CD4-positive, alpha-beta T cell (primary cell): ENCODE measurements at regions of chr6 and their contacts with region 1.

Region 1: DNA sequence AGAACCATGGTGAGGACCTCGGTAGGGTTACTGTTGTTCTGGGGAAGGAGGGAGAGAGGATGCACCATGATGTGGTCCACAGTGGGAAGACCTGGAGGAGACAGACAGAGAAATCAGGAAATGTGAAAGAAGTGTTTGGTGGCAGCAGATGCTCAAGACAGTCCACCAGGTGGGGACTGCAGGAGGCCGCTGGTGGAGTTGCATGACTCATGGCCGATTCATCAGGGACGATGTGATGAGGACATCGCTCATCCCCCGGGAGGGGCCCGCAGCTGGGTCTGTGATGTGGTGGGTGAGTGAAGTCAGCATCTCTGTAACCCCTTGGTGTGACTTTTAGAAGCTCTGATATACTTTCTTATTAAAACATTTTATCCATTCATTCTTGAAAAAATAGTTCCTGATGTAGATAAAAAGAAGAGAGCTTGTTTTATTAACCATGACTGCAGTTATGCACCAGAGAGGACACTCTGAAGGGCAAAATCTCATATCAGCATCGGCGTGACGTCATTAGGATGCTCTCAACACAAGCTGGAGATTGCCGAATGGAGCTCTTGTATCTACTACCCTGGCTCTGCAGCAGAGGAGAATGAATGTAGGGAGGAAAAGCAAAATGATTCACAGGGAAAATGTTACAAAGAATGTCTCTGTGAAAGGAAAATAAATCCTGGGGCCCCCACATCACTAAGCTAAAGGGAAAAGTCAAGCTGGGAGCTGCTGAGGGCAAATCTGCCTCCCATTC is 71.2 kb downstream of the RAMACL start:
- DNase-seq: peak in 9 of 14 experiments; percentile 17 to 72 (median 44)
- ATAC-seq: no peak
- H3K4me3 ChIP-seq: no peak overlapping the region
- H3K4me3 Mint-ChIP-seq: no peak overlapping the region
- H3K27ac ChIP-seq: no peak overlapping the region
- H3K27ac Mint-ChIP-seq: no peak overlapping the region
- H3K4me1 ChIP-seq: peaks cover 7% of the 10 kb centered on the region
- H3K4me1 Mint-ChIP-seq: peaks cover 8% of the 10 kb centered on the region
- H3K27me3 ChIP-seq: no peaks in the 10 kb centered on the region
- H3K27me3 Mint-ChIP-seq: no peaks in the 10 kb centered on the region
- CTCF ChIP-seq: no peak

Region 2: GRCh38 chr6:166143011-166143410 is 372.2 kb before region 1 on chr6:
- CTCF ChIA-PET with region 1: no interaction called
- POLR2A ChIA-PET with region 1: no interaction called
- intact Hi-C with region 1: no loop called
- DNase-seq: no peak
- ATAC-seq: no peak
- H3K4me3 ChIP-seq: no peak overlapping the region
- H3K4me3 Mint-ChIP-seq: no peak overlapping the region
- H3K27ac ChIP-seq: no peak overlapping the region
- H3K27ac Mint-ChIP-seq: no peak overlapping the region
- H3K4me1 ChIP-seq: no peaks in the 10 kb centered on the region
- H3K4me1 Mint-ChIP-seq: no peaks in the 10 kb centered on the region
- H3K27me3 ChIP-seq: no peaks in the 10 kb centered on the region
- H3K27me3 Mint-ChIP-seq: peaks cover 4% of the 10 kb centered on the region
- CTCF ChIP-seq: no peak

Region 3: GRCh38 chr6:166275714-166276166 is 239.5 kb before region 1 on chr6:
- CTCF ChIA-PET with region 1: no interaction called
- POLR2A ChIA-PET with region 1: no interaction called
- intact Hi-C with region 1: loop called (anchors 5 to 10 kb)
- DNase-seq: peak; percentile 47 to 91 (median 80)
- ATAC-seq: peak; percentile 96
- H3K4me3 ChIP-seq: no peak overlapping the region
- H3K4me3 Mint-ChIP-seq: no peak overlapping the region
- H3K27ac ChIP-seq: no peak overlapping the region
- H3K27ac Mint-ChIP-seq: no peak overlapping the region
- H3K4me1 ChIP-seq: peaks cover 10% of the 10 kb centered on the region
- H3K4me1 Mint-ChIP-seq: peaks cover 8% of the 10 kb centered on the region
- H3K27me3 ChIP-seq: no peaks in the 10 kb centered on the region
- H3K27me3 Mint-ChIP-seq: peaks cover 8% of the 10 kb centered on the region
- CTCF ChIP-seq: peak; percentile 98

Region 4: DNA sequence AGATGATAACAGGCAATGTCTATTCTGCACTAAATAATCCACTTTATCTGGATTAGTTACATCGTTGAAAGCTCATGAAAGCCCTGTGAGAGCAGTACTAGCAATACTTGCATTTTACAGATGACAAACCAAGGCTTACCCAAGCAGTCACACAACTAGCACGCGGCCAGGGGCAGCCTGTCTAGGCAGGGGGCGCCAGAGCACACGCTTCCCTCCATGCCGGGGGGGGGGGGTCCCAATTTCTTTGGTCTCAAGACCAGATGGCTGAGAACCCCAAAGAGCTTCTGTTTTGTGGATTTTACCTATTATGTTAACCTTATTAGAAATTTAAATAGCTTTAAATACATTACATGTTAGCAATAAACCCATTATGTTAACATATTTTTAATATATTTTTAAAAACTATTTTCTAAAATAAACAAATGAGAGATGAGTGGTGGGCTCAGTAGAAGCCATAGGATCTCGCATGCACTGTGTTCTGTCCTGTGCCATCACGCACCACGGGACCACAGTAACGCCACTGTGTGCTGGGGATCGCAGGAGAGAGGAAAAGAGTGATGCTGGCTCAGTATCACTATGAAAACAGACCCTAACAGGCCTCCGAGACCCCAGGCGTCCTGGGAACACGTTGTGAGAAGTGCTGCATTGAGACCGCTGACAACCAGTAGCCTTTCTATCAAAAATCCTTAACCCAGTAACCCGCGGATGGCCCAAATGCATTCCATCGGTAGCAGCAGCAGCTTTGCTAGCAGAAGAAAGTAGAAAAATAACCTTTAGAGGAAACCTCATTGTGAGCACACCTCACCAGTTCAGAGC is 201.8 kb before region 1 on chr6:
- CTCF ChIA-PET with region 1: no interaction called
- POLR2A ChIA-PET with region 1: no interaction called
- intact Hi-C with region 1: loop called in 1 of 2 experiments (anchors 5 kb)
- DNase-seq: peak in 13 of 14 experiments; percentile 23 to 79 (median 44)
- ATAC-seq: peak; percentile 99
- H3K4me3 ChIP-seq: no peak overlapping the region
- H3K4me3 Mint-ChIP-seq: no peak overlapping the region
- H3K27ac ChIP-seq: no peak overlapping the region
- H3K27ac Mint-ChIP-seq: no peak overlapping the region
- H3K4me1 ChIP-seq: peaks cover 2% of the 10 kb centered on the region
- H3K4me1 Mint-ChIP-seq: no peaks in the 10 kb centered on the region
- H3K27me3 ChIP-seq: peaks cover 12 to 21% of the 10 kb centered on the region in 2 experiments
- H3K27me3 Mint-ChIP-seq: peaks cover 23% of the 10 kb centered on the region
- CTCF ChIP-seq: peak; percentile 78

Region 5: DNA sequence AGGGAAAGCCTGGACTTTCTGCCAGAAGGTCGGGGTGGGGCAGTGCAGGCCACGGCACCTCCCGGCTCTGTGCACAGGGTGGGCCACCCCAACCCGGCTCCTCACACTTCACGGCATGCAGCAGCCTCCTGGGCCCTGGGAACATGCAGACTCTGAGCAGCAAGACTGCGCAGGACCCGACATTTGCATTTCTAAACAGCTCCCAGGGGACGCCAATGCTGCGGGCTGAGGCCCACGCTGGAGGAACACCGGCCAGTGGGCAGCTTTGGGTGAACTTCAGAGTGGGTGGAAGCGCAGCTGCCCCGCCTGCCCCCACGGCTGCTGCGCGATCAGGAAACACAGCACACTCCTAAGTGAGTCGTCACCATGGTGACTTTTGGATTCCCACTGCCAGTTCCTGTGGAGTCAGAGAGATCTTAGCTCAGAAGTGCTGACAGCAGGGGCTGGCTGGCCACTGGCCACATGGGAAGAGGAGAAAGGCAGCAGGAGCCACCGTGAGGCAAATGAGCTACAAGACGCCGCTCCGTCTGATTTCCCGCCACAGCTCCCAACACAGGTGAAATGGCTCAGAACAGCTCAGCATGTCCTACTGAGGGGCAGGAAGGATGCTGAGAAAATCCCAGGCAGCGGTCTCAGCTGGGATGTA is 389.0 kb after region 1 on chr6:
- CTCF ChIA-PET with region 1: no interaction called
- POLR2A ChIA-PET with region 1: no interaction called
- intact Hi-C with region 1: no loop called
- DNase-seq: no peak
- ATAC-seq: no peak
- H3K4me3 ChIP-seq: no peak overlapping the region
- H3K4me3 Mint-ChIP-seq: no peak overlapping the region
- H3K27ac ChIP-seq: no peak overlapping the region
- H3K27ac Mint-ChIP-seq: no peak overlapping the region
- H3K4me1 ChIP-seq: peaks cover 20% of the 10 kb centered on the region
- H3K4me1 Mint-ChIP-seq: peaks cover 22% of the 10 kb centered on the region
- H3K27me3 ChIP-seq: no peaks in the 10 kb centered on the region
- H3K27me3 Mint-ChIP-seq: no peaks in the 10 kb centered on the region
- CTCF ChIP-seq: no peak